GM18951 (cell line): ENCODE measurements at regions of chr11 and their contacts with region 1.

Region 1: DNA sequence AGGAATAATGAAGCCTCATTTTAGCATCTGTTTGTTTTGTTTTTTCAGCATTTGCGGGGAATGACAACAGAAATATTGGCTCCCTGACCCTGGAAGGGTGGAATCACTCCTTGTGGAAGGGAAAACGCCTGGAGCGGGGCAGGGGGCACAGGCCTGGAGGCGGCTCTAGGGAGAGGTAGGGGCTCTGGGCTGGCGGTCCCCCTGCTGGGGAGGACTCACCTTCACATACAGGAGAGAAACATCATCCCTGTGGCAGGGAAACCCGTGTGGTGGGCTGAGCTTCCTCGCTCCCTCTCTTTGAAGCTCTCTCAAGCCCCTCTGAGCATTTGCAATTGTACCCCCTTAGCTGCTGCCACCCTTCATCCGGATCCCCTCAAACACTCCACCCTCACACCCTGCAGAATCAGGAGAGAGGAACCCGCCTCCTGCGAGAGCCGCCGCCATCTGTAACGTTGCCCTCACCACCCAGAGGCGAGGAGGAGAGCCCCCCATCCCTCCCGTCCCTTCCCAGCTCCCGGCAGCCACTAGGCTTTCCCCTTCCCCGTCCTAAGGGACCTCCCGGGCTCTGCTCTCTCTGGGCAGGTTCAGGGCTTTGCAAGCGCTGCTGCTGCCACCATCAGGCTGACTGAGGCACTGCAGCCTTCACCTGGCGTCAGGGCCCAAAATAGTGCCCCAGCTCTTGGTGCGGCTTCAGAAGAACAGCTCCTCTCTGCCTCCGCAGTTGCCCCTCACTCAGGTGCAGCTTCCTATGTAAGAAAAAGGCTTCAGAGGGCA is 10.4 kb downstream of the KIRREL3 start:
- POLR2A ChIP-seq: no peak

Region 2: DNA sequence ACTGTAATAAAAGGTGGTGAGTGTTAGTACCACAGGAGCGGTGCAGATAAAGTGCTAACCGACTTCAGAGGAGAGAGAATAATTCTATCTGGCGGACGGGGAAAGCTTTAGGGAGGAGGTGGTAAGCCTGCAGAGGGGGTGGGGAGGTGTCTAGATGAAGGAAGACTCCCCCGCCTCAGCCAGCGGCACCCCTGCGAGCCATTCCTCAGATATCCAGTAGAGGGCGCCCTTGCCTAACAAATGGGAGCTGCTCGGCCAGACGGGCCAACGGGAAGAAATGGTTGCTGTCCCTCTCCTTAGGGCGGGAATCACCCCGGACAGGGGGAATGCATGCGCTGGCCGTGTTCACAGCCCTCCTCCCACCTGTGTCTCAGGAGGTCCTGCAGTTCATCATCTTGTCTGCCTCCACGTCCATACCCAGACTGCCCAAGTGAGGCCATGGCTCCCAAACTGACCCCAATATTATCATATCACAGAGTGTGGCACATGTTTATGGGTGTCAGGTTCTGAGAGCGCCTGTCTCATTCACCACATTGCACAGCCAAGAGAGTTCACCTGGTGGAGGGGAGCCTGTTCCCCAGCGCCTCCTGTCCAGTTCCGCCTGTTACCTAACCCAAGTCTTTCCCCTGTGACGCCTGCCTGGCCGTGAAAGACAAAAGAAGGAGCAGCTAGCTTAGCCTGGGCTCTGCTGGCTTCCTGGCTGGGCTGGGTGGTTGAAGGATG is 549.2 kb before region 1 on chr11:
- in situ Hi-C with region 1: loop called (anchors 10 kb)
- POLR2A ChIP-seq: no peak

Region 3: DNA sequence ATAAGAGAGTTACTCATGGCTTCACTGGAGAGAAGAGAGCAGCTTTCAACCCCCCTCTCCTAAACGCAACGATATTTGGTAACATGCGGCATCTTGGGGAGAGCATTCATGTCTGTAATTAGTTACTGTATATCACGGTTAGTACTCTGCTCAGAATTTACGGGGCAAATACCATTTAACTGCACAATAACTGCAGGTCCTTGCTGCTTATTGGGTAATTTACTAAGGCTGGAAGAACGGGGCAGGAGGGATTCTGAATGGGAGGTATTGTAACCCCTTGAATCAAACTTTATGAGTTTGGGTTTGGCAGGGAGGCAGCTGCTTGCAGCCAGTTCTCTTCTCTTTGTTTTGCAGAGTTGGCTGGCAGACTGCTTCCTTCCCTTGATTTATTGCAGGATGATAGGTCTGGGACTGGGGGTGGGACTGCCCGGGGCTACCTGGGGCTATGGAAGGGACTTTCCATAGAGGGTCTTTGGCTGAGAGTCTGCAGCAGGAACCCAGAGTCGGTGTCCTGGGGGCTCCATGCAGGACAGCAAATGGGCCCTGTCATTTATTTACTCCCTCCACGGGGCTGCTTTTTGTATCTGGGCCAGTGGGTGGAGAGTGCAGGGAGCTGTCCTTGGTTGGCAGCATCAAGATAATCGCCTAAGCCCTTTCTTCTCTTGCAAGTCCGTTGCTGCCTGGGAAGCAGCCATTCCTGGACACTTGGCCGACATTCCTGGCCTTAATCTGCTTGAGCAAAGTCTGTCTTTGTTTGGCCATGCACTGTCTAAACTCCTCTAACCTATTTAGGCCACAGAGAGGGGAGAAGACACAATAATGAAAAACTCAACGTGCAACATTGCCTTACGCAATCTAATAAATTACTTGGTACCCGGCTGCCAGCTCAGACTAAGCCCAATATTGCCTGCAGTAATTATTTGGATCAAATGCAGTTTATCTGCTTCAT is 445.7 kb before region 1 on chr11:
- in situ Hi-C with region 1: no loop called
- POLR2A ChIP-seq: no peak

Region 4: DNA sequence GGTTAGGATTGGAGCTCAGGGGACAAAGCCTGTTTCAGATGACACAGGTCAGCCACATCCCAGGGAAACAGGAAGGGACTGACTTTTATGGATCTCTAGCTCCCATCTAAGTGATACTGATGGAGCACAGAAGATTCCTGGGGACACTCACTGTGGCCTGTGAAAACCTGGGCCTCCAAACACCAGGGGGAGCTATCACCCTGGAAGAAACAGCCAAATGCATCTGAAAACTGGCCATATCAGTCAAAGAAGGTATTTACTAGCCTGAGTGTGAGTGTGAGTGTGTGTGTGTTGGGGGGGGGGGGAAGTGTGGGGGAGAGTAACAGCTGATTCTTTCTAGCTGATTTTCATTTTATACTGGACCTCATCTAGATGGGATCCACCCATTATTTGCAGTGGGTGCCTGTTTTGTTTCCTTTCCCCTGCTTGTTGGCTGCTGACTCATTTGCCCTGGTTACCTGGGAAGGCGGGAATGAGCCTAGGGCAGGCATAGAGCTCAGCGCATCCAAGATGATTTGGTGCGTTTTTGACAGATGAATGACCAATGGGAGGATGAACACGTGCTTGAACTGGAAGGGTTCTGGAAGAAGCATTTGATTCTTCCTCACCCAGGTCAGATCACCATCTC is 273.6 kb before region 1 on chr11:
- in situ Hi-C with region 1: loop called (anchors 10 kb)
- POLR2A ChIP-seq: no peak

Region 5: DNA sequence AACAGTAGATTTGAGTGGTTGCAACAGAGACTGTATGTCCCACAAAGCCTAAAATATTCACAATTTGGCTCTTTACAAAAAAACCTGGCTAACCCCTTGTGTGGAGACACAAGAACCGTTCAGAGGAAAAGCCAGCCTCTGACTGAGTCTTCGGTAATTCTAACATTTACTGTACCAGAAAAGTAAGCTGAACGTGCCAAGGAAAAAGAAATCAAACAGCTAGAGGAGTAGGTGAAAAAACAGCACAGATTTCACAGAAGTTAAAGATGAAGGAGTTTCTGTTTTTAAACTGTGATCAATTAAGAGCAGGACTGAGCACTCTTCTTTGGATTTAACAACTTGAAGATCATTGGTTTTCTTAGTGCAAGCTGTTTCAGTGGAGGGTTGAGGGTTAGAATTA is 435.2 kb after region 1 on chr11:
- in situ Hi-C with region 1: no loop called
- POLR2A ChIP-seq: no peak